ENCODE measurements at regions of chr19 and their contacts with region 1.

Region 1: DNA sequence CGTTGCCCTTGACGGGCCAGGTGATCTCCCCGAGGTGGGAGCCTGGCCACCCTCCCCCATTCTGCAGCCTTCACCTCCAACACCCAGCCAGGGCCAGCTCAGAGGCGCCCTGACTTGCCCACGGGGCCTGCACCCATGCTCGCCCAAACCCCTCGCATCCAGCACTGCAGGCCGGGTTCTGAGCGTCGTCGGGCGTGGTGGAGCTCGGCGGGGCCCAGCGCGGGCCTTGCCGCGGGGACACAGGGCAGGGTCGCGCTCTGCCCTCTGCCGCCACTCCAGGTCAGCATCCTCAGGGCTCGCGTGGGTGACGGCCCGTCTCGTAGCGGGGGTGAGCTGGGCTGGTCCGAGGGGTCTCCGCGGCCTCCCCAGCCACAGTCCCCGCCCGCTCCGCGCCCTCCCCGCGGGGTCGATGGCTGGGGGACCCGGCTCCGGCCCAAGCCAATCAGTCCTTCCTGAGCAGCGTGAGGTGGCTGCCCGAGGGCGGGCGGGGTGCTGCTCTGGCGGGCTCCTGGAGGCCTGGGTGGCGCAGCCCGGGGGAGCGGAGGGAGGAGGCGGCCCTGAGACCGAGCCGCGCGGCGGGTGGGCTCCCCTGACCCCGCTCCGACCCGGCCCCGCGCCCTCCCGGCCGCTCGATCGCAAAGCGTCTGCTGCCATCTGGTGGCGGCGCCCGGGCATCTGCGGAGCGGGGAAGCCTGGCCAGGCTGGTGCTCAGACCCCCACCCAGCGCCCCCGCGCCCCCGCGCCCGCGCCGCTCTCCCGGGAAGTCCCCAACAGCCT is 61.4 kb downstream of the CCNE1 start:
- DNase-seq: peak; percentile 52 to 76 (median 65)
- H3K4me3 ChIP-seq: peak overlapping the region; percentile 32
- H3K4me3 Mint-ChIP-seq: peak overlapping the region in 6 of 7 donors; percentile 41 to 78 (median 66)
- H3K27ac ChIP-seq: no peak overlapping the region
- H3K27ac Mint-ChIP-seq: no peak overlapping the region
- H3K4me1 ChIP-seq: no peaks in the 10 kb centered on the region
- H3K4me1 Mint-ChIP-seq: peaks cover 6 to 14% (median 11%) of the 10 kb centered on the region in 3 donors
- H3K27me3 ChIP-seq: no peaks in the 10 kb centered on the region
- H3K27me3 Mint-ChIP-seq: peaks cover 10 to 32% of the 10 kb centered on the region in 2 donors

Region 2: GRCh38 chr19:29724102-29724641 is 149.0 kb before region 1 on chr19:
- CTCF ChIA-PET with region 1: interaction called, 50 read pairs
- POLR2A ChIA-PET with region 1: no interaction called
- DNase-seq: peak in 1 of 5 donors; percentile 52
- H3K4me3 ChIP-seq: no peak overlapping the region
- H3K4me3 Mint-ChIP-seq: peak overlapping the region; percentile 38 to 83 (median 68)
- H3K27ac ChIP-seq: no peak overlapping the region
- H3K27ac Mint-ChIP-seq: peak overlapping the region in 2 of 8 donors; percentile 11 to 23
- H3K4me1 ChIP-seq: no peaks in the 10 kb centered on the region
- H3K4me1 Mint-ChIP-seq: peaks cover 6 to 17% (median 12%) of the 10 kb centered on the region in 3 donors
- H3K27me3 ChIP-seq: peaks cover 7% of the 10 kb centered on the region
- H3K27me3 Mint-ChIP-seq: peaks cover 17 to 27% of the 10 kb centered on the region in 2 donors

Region 3: DNA sequence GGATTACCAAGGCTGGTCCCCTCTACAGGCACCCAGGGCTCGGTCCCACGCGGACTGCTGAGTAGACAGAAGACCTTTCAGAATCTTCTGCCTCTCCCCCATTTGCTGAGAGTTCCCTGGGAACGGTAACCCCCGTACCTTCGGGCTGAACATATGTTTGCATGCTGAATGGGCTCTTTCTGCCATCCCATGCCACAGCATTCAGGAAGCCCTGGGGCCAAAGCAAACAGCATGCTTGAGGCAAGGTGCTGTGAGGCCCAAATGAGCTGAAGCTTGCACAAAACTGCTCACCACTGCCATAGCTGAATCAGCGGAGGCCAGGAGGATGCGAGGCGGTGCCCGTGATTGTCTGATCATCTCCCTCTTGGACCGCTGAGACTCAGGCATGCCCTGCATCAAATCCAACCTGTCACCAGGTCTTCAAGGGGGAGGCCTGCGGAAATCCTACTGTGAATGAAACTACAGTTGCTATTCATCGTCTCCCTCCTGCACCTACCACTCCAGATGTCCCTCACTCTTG is 141.8 kb before region 1 on chr19:
- CTCF ChIA-PET with region 1: interaction called, 50 read pairs
- POLR2A ChIA-PET with region 1: interaction called, 3 read pairs
- DNase-seq: no peak
- H3K4me3 ChIP-seq: no peak overlapping the region
- H3K4me3 Mint-ChIP-seq: no peak overlapping the region
- H3K27ac ChIP-seq: no peak overlapping the region
- H3K27ac Mint-ChIP-seq: no peak overlapping the region
- H3K4me1 ChIP-seq: no peaks in the 10 kb centered on the region
- H3K4me1 Mint-ChIP-seq: no peaks in the 10 kb centered on the region
- H3K27me3 ChIP-seq: peaks cover 11% of the 10 kb centered on the region
- H3K27me3 Mint-ChIP-seq: peaks cover 8 to 21% of the 10 kb centered on the region in 2 donors

Region 4: DNA sequence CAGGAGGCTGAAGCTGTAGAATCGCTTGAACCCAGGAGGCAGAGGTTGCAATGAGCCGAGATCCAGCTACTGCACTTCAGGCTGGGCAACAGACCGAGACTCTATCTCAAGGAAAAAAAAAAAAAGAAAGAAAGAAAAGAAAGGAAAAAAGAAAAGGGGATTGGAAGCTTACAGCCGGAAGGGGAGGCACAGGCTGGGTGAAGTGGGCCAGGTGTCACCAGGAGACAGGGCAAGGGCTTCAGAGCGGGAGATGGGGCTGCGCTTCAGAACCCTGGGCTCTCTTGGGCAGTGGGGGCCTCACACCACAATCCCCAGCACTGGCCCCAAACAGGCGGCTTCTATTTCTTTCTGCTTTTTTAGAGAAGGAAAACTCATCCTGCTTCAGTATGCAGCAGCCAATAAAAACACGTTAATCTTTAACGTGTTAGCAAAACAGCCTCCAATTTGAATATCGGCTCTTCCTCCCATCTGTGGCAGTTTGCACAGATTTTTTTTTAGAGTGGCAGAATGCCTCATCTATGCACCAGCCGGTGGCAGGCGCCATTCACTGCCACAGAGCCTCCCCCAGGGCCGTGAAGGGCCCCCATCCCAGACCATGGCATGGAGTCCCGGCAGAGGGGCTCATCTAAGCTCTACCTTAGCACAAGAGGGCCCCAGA is 111.5 kb before region 1 on chr19:
- CTCF ChIA-PET with region 1: interaction called, 112 read pairs
- POLR2A ChIA-PET with region 1: interaction called, 3 read pairs
- DNase-seq: no peak
- H3K4me3 ChIP-seq: no peak overlapping the region
- H3K4me3 Mint-ChIP-seq: no peak overlapping the region
- H3K27ac ChIP-seq: no peak overlapping the region
- H3K27ac Mint-ChIP-seq: no peak overlapping the region
- H3K4me1 ChIP-seq: no peaks in the 10 kb centered on the region
- H3K4me1 Mint-ChIP-seq: peaks cover 0 to 2% (median 0%) of the 10 kb centered on the region in 3 donors
- H3K27me3 ChIP-seq: no peaks in the 10 kb centered on the region
- H3K27me3 Mint-ChIP-seq: peaks cover 3 to 4% of the 10 kb centered on the region in 2 donors

Region 5: GRCh38 chr19:29771708-29772414 is 101.4 kb before region 1 on chr19:
- CTCF ChIA-PET with region 1: interaction called, 11 read pairs
- POLR2A ChIA-PET with region 1: no interaction called
- DNase-seq: peak in 1 of 5 donors; percentile 23
- H3K4me3 ChIP-seq: no peak overlapping the region
- H3K4me3 Mint-ChIP-seq: no peak overlapping the region
- H3K27ac ChIP-seq: no peak overlapping the region
- H3K27ac Mint-ChIP-seq: peak overlapping the region in 1 of 8 donors; percentile 43
- H3K4me1 ChIP-seq: no peaks in the 10 kb centered on the region
- H3K4me1 Mint-ChIP-seq: peaks cover 0 to 6% (median 0%) of the 10 kb centered on the region in 3 donors
- H3K27me3 ChIP-seq: no peaks in the 10 kb centered on the region
- H3K27me3 Mint-ChIP-seq: peaks cover 0 to 13% of the 10 kb centered on the region in 2 donors

Region 6: DNA sequence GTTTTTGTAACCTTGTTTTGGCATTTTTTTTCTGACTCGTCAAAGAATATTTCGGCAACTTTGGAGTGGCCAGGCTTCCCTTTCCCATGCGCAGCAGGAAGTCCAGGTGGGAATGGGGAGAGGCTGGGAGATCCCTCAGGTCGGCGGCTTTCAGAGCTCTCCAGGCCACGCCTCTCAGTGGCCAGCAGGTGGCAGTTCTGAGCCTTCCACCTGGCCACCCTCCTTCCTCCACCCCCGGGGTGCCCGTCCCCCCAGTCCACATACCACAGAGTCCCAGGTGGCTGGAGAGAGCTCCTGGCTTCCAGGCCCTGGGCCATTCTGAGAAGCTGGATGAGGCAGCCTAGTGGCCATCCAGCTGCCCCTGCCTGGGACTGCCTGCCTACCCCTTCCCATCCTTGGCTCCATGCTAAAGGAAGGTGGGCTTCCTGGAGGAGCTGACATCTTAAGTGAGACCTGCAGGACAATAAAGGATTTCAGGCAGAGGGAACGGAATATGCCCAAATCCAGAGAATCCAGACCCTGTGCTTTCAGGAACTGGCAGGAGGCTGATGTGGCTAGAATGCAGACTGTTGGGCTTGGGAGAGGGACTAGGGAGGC is 15.1 kb before region 1 on chr19:
- CTCF ChIA-PET with region 1: interaction called, 20 read pairs
- POLR2A ChIA-PET with region 1: no interaction called
- DNase-seq: peak in 3 of 5 donors; percentile 14 to 44 (median 25)
- H3K4me3 ChIP-seq: no peak overlapping the region
- H3K4me3 Mint-ChIP-seq: no peak overlapping the region
- H3K27ac ChIP-seq: no peak overlapping the region
- H3K27ac Mint-ChIP-seq: no peak overlapping the region
- H3K4me1 ChIP-seq: no peaks in the 10 kb centered on the region
- H3K4me1 Mint-ChIP-seq: no peaks in the 10 kb centered on the region
- H3K27me3 ChIP-seq: no peaks in the 10 kb centered on the region
- H3K27me3 Mint-ChIP-seq: peaks cover 24 to 40% of the 10 kb centered on the region in 2 donors

Region 7: GRCh38 chr19:29887442-29887855 is 14.2 kb after region 1 on chr19:
- CTCF ChIA-PET with region 1: no interaction called
- POLR2A ChIA-PET with region 1: no interaction called
- DNase-seq: no peak
- H3K4me3 ChIP-seq: no peak overlapping the region
- H3K4me3 Mint-ChIP-seq: no peak overlapping the region
- H3K27ac ChIP-seq: no peak overlapping the region
- H3K27ac Mint-ChIP-seq: no peak overlapping the region
- H3K4me1 ChIP-seq: no peaks in the 10 kb centered on the region
- H3K4me1 Mint-ChIP-seq: peaks cover 0 to 3% (median 0%) of the 10 kb centered on the region in 3 donors
- H3K27me3 ChIP-seq: no peaks in the 10 kb centered on the region
- H3K27me3 Mint-ChIP-seq: peaks cover 2 to 10% of the 10 kb centered on the region in 2 donors